ENCODE measurements at regions of chr3 and their contacts with region 1.

Region 1: DNA sequence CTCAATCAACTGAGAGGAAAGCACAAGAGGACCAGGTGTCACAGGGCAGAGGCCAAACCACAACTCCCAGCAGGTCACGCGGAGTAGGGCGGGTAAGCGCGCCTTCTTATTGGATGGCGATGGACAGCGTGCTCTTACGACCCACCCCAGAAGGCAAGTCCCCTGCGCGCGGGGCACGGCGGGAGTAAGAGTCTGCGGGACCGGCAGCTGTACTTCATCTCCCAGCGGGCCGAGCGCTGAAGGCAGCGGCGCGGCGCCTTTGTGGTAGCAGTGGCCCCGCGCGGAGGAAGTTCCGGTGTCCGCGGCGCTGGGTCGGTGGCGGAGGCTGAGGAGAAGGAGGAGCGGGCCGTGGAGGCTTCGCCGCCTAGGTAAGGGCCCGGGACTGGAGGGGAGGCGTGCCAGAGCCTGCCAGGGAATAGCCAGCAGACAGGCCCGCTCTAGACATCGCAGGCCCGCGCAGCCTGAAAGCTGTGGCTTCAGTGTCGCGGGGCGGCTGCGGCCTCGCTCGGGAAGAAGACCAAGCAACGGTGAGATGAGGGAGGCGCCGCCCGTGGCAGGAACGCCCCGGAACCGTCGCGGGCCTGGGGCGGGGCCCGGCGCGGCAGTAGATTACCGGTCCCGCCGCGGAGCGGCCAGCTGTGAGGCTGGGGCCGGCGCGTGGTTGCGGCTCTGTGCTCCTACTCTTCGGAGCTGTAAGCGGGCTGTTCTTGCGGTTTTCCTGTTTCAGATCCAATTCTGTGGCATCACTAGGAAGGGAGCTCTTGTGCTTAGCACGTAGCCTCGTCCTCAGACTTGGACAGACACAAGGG is at the start of gene RBM6:
- DNase-seq: peak; percentile 97
- H3K4me3 Mint-ChIP-seq: peak within 1 kb of the TSS; percentile 93
- H3K27ac Mint-ChIP-seq: peak within 1 kb of the TSS; percentile 98
- H3K4me1 Mint-ChIP-seq: peaks cover 5% of the 10 kb centered on the region
- H3K27me3 Mint-ChIP-seq: no peaks in the 10 kb centered on the region
- CTCF ChIP-seq: no peak
- total RNA-seq, gene RBM6: 58.0 and 65.8 TPM in 2 replicates

Region 2: GRCh38 chr3:49955636-49956035 is 15.6 kb after region 1 on chr3:
- CTCF ChIA-PET with region 1: no interaction called
- POLR2A ChIA-PET with region 1: interaction called, 11 read pairs
- intact Hi-C with region 1: no loop called
- DNase-seq: no peak
- H3K4me3 Mint-ChIP-seq: no peak overlapping the region
- H3K27ac Mint-ChIP-seq: no peak overlapping the region
- H3K4me1 Mint-ChIP-seq: peaks cover 6% of the 10 kb centered on the region
- H3K27me3 Mint-ChIP-seq: no peaks in the 10 kb centered on the region
- CTCF ChIP-seq: no peak